CD8-positive, alpha-beta T cell (primary cell): ENCODE measurements at regions of chr7 and their contacts with region 1.

Region 1: GRCh38 chr7:150988230-150989226 is 2.3 kb upstream of the NOS3 start:
- DNase-seq: peak; percentile 45 to 80 (median 72)
- ATAC-seq: peak; percentile 79
- H3K4me3 ChIP-seq: no peak overlapping the region
- H3K4me3 Mint-ChIP-seq: peak overlapping the region; percentile 37
- H3K27ac ChIP-seq: no peak overlapping the region
- H3K27ac Mint-ChIP-seq: no peak overlapping the region
- H3K4me1 ChIP-seq: peaks cover 22% of the 10 kb centered on the region
- H3K4me1 Mint-ChIP-seq: peaks cover 18% of the 10 kb centered on the region
- H3K27me3 ChIP-seq: peaks cover 0 to 2% of the 10 kb centered on the region in 2 experiments
- H3K27me3 Mint-ChIP-seq: peaks cover 6% of the 10 kb centered on the region
- CTCF ChIP-seq: peak; percentile 79

Region 2: DNA sequence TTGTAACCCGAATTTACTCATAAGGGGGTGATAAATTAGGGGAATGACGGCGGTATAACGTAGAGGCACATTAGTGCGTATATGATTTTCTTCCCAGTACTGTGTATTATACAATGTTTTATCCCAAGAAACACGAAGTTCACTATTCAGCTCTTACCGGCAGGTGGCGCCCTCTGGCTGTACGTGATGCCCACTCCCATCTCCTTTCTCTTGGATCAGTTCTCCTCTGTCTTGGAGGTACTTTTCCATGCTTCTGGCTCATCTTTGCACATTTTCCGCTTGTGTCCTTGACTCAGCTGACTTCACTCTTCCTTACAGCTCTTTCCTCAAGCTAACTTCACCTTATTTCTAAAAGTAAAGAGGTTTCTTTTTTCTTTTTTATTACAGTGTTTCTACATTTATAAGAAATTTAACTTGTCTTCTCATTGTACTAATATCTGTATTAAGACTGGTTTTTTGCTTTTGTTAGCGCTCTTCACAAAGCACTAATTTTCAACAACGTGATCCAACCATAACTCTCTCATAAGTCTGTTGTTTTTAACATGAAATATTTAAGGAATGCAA is 209.7 kb before region 1 on chr7:
- CTCF ChIA-PET with region 1: interaction called, 3 read pairs
- POLR2A ChIA-PET with region 1: no interaction called
- intact Hi-C with region 1: loop called (anchors 5 to 10 kb)
- DNase-seq: peak; percentile 46 to 82 (median 73)
- ATAC-seq: peak; percentile 71
- H3K4me3 ChIP-seq: no peak overlapping the region
- H3K4me3 Mint-ChIP-seq: no peak overlapping the region
- H3K27ac ChIP-seq: no peak overlapping the region
- H3K27ac Mint-ChIP-seq: no peak overlapping the region
- H3K4me1 ChIP-seq: peaks cover 2% of the 10 kb centered on the region
- H3K4me1 Mint-ChIP-seq: peaks cover 5% of the 10 kb centered on the region
- H3K27me3 ChIP-seq: no peaks in the 10 kb centered on the region
- H3K27me3 Mint-ChIP-seq: peaks cover 2% of the 10 kb centered on the region
- CTCF ChIP-seq: peak; percentile 93

Region 3: GRCh38 chr7:150787321-150788281 is 200.9 kb before region 1 on chr7:
- CTCF ChIA-PET with region 1: no interaction called
- POLR2A ChIA-PET with region 1: no interaction called
- intact Hi-C with region 1: loop called in 1 of 2 experiments (anchors 10 kb)
- DNase-seq: peak in 1 of 9 experiments; percentile 21
- ATAC-seq: no peak
- H3K4me3 ChIP-seq: no peak overlapping the region
- H3K4me3 Mint-ChIP-seq: no peak overlapping the region
- H3K27ac ChIP-seq: no peak overlapping the region
- H3K27ac Mint-ChIP-seq: no peak overlapping the region
- H3K4me1 ChIP-seq: no peaks in the 10 kb centered on the region
- H3K4me1 Mint-ChIP-seq: no peaks in the 10 kb centered on the region
- H3K27me3 ChIP-seq: no peaks in the 10 kb centered on the region
- H3K27me3 Mint-ChIP-seq: peaks cover 17% of the 10 kb centered on the region
- CTCF ChIP-seq: no peak

Region 4: DNA sequence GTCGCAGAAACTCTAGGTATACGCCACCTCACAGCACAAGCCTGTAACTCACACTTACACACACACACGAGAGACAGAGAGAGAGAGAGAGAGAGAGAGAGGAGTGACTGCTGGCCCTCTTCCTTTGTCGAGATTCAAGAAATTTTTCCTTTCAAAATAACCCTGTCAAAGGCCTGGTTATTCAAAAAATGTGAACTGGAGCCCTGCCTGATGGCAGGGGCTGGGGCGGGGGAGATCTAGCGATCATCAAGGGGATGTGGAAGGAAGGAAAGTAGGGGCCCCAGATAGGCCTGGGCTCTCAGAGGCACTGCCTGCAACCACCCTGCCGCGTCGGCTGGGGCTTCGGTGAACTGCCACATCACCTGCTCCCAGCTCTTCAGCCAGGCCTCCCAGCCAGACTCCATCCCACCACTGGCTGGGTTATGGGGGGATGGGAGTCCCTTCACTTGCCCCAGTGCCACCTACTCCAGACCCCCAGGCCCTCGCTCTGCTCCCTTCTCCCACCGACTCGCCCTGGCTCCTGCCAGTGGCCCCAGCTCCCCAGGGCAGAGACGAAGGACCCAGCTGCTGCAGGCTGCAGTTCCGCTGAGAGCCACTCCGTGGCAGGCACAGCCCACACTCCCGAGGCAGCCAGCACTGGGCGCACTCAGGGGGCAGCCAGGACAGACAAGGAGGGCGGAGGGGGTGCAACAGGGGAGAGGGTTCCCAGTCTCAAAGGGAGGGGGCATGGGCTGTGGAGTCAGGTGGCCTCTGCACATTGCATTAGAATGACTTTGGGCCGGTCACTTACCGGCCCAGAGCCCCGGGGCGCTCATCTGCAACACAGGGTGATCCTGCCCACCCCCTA is 25.8 kb before region 1 on chr7:
- CTCF ChIA-PET with region 1: interaction called, 74 read pairs
- POLR2A ChIA-PET with region 1: no interaction called
- intact Hi-C with region 1: loop called (anchors 1 kb)
- DNase-seq: peak in 8 of 9 experiments; percentile 40 to 76 (median 66)
- ATAC-seq: peak; percentile 96
- H3K4me3 ChIP-seq: no peak overlapping the region
- H3K4me3 Mint-ChIP-seq: no peak overlapping the region
- H3K27ac ChIP-seq: no peak overlapping the region
- H3K27ac Mint-ChIP-seq: no peak overlapping the region
- H3K4me1 ChIP-seq: peaks cover 5% of the 10 kb centered on the region
- H3K4me1 Mint-ChIP-seq: peaks cover 6% of the 10 kb centered on the region
- H3K27me3 ChIP-seq: peaks cover 6 to 9% of the 10 kb centered on the region in 2 experiments
- H3K27me3 Mint-ChIP-seq: peaks cover 24% of the 10 kb centered on the region
- CTCF ChIP-seq: peak; percentile 86

Region 5: GRCh38 chr7:150968734-150969372 is 19.7 kb before region 1 on chr7:
- CTCF ChIA-PET with region 1: interaction called, 74 read pairs
- POLR2A ChIA-PET with region 1: interaction called, 12 read pairs
- intact Hi-C with region 1: no loop called
- DNase-seq: peak in 1 of 9 experiments; percentile 9
- ATAC-seq: no peak
- H3K4me3 ChIP-seq: no peak overlapping the region
- H3K4me3 Mint-ChIP-seq: no peak overlapping the region
- H3K27ac ChIP-seq: no peak overlapping the region
- H3K27ac Mint-ChIP-seq: no peak overlapping the region
- H3K4me1 ChIP-seq: peaks cover 6% of the 10 kb centered on the region
- H3K4me1 Mint-ChIP-seq: peaks cover 10% of the 10 kb centered on the region
- H3K27me3 ChIP-seq: no peaks in the 10 kb centered on the region
- H3K27me3 Mint-ChIP-seq: no peaks in the 10 kb centered on the region
- CTCF ChIP-seq: no peak

Region 6: DNA sequence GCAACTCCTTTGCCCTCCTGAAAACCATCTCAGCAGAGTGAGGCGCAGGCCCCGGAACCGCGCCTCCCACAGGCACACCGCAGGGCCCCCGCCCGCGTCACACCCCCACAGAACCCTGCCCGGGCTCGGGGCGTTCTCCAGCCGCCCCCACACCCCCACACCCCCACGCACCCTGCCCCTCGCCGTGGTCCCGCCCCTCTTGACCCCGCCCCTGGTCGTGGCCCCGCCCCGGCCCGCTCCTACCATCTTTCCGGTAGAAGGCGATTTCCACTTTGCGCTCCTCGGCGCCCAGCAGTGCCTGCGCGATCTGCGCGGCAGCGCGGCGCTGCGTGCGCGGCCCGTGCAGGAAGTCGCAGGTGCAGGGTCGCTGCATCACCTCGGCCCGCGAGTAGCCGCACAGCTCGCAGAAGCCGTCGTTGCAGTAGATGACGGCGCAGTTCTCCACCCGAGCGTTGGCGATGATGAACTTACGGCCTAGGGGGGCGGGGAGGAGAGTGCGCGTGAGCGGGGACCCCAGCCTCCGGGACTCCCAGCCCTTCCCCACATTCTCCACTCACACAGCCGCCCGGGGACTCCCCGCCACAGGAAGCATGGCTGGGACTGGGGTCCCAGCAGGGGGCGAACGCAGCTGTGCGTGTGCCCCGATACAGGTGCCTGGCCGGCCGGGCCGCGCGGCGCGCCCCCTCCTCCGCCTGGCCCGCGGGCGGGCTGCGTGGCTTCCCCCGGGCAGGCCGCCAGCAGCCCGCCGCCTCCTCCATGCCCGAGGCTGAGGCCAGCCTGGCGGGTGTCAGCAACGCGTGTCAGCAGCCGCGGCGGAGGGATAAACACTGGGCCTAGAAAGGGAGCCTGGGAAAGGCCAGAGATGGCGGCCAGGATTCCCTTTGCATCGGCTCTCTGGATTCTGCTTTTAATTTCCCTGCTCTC is 13.8 kb before region 1 on chr7:
- CTCF ChIA-PET with region 1: interaction called, 33 read pairs
- POLR2A ChIA-PET with region 1: interaction called, 12 read pairs
- intact Hi-C with region 1: loop called in 1 of 2 experiments (anchors 1 kb)
- DNase-seq: peak; percentile 70 to 90 (median 80)
- ATAC-seq: peak; percentile 77
- H3K4me3 ChIP-seq: peak overlapping the region; percentile 63 to 69
- H3K4me3 Mint-ChIP-seq: peak overlapping the region; percentile 84
- H3K27ac ChIP-seq: peak overlapping the region; percentile 24 to 82
- H3K27ac Mint-ChIP-seq: peak overlapping the region; percentile 89
- H3K4me1 ChIP-seq: peaks cover 43% of the 10 kb centered on the region
- H3K4me1 Mint-ChIP-seq: peaks cover 38% of the 10 kb centered on the region
- H3K27me3 ChIP-seq: peaks cover 17 to 20% of the 10 kb centered on the region in 2 experiments
- H3K27me3 Mint-ChIP-seq: peaks cover 18% of the 10 kb centered on the region
- CTCF ChIP-seq: peak; percentile 24

Region 7: DNA sequence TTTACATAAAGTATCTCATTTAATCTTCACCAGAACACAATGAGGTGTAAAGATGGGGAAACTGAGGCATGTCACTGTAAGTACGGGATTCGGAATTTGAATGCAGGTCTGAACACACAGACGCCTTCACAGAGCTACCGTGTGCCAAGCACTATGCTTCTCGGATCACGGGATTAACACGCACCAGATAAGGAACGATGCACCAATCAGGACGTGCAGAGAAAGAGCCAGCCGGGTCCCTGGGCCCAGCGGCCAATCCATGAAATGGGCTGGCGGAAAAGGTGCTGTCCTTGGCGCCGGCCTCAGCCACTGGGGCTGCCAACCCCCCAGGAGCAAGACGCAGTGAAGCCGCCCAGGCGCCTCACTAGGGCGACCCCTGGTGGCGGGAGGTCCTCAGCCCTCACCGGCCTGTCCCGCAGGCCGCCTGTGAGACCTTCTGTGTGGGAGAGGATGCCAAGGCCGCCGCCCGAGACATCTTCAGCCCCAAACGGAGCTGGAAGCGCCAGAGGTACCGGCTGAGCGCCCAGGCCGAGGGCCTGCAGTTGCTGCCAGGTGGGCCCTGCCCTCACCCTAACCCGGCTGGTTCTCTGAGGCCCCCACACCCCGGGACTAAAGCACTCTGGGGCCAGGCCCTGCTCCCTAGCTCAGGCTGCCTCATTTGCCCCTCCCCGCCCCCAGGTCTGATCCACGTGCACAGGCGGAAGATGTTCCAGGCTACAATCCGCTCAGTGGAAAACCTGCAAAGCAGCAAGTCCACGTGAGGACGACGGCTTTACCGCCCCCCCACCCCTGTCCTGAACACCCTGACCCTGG is 20.2 kb after region 1 on chr7:
- CTCF ChIA-PET with region 1: interaction called, 54 read pairs
- POLR2A ChIA-PET with region 1: interaction called, 3 read pairs
- intact Hi-C with region 1: no loop called
- DNase-seq: peak; percentile 56 to 89 (median 78)
- ATAC-seq: peak; percentile 47
- H3K4me3 ChIP-seq: peak overlapping the region; percentile 31 to 46
- H3K4me3 Mint-ChIP-seq: peak overlapping the region; percentile 82
- H3K27ac ChIP-seq: peak overlapping the region; percentile 40 to 68
- H3K27ac Mint-ChIP-seq: peak overlapping the region; percentile 90
- H3K4me1 ChIP-seq: peaks cover 68% of the 10 kb centered on the region
- H3K4me1 Mint-ChIP-seq: peaks cover 61% of the 10 kb centered on the region
- H3K27me3 ChIP-seq: no peaks in the 10 kb centered on the region
- H3K27me3 Mint-ChIP-seq: no peaks in the 10 kb centered on the region
- CTCF ChIP-seq: peak; percentile 68